H1 (cell line): ENCODE measurements at regions of chr3 and their contacts with region 1.

Region 1: DNA sequence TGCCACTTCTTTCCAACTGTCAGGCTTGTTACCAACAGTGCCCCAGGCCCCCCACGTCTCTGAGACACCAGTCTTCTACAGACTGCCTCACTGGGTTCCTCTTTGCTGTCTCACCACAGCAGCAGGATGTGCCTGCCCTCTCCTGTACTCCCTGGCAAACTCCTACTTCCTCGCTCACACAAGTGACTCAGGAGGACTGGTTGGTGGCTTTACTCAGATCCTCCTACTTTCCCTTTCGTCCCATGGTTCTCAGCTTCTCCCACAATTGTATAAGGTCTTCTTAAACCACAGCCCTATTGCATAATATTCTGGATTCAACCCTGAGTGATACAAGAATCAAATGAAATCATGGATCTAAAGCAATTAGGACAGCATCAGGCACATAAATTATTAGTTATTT is 246.6 kb upstream of the PROK2 start:
- DNase-seq: no peak
- H3K4me3 ChIP-seq: no peak overlapping the region
- H3K27ac ChIP-seq: no peak overlapping the region
- H3K4me1 ChIP-seq: peaks cover 0 to 6% (median 4%) of the 10 kb centered on the region in 4 experiments; a peak in 4 of 7 replicates
- H3K27me3 ChIP-seq: no peaks in the 10 kb centered on the region
- CTCF ChIP-seq: no peak
- EP300 ChIP-seq: no peak
- POLR2A ChIP-seq: no peak
- RAD21 ChIP-seq: no peak; a peak in 1 of 4 replicates

Region 2: DNA sequence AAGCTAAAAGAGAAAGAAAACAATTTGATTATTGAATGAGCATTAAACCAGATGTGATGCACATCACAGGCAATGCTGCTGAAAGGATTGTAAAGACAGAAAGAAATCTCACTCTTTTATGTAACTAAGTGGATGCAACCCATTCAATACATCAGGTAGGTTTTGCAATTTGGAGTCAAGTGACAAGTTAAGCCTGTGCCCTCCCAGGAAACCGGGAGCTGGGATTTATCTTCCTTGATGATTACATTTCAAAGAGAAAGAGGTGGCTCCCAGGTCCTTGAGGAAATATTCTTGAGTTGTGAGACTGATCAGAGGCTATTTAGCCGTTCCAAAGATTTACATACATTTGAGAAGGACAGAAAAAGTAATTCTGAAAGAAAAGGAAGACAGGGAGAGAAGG is 27.6 kb before region 1 on chr3:
- CTCF ChIA-PET with region 1: interaction called, 3 read pairs
- POLR2A ChIA-PET with region 1: interaction called, 15 read pairs
- DNase-seq: no peak
- H3K4me3 ChIP-seq: no peak overlapping the region; a peak in 1 of 8 replicates
- H3K27ac ChIP-seq: no peak overlapping the region
- H3K4me1 ChIP-seq: peaks cover 4 to 17% (median 9%) of the 10 kb centered on the region in 4 experiments; a peak in 6 of 7 replicates
- H3K27me3 ChIP-seq: no peaks in the 10 kb centered on the region
- CTCF ChIP-seq: no peak
- EP300 ChIP-seq: no peak
- POLR2A ChIP-seq: no peak
- RAD21 ChIP-seq: no peak

Region 3: DNA sequence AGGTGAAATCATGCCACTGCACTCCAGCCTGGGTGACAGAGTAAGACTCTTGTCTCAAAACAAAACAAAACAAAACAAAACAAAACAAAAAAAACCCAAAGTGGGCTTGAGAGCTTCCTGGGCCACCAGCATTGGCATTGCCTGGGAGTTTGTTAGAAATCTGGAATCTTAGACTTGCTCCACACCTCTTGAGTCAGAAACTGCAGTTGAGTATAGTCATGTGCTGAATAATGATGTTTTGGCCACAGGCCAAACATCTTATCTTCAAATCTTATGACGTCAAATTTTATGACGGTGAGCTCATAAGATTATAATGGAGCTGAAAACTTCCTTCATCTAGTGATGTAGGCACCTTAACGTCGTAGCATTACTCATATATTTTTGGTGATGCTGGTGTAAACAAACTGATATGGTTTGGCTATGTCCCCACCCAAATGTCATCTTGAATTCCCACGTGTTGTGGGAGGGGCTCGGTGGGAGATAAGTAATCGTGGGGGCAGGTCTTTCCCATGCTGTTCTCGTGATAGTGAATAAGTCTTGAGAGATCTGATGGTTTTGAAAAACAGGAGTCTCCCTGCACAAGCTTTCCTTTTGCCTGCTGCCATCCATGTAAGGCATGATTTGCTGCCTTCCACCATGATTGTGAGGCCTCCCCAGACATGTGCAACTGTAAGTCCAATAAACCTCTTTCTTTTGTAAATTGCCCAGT is 21.3 kb after region 1 on chr3:
- CTCF ChIA-PET with region 1: no interaction called
- POLR2A ChIA-PET with region 1: no interaction called
- DNase-seq: no peak
- H3K4me3 ChIP-seq: no peak overlapping the region
- H3K27ac ChIP-seq: no peak overlapping the region
- H3K4me1 ChIP-seq: no peaks in the 10 kb centered on the region
- H3K27me3 ChIP-seq: no peaks in the 10 kb centered on the region
- CTCF ChIP-seq: no peak
- EP300 ChIP-seq: no peak
- POLR2A ChIP-seq: no peak
- RAD21 ChIP-seq: no peak